Mammary epithelial cell (primary cell): ENCODE measurements at regions of chr10 and their contacts with region 1.

Region 1: GRCh38 chr10:5595591-5596590 is 70.5 kb downstream of the ASB13 start:
- DNase-seq: peak; percentile 99
- H3K4me3 ChIP-seq: peak overlapping the region; percentile 12 to 36 (median 30)
- H3K27ac ChIP-seq: peak overlapping the region; percentile 90
- H3K4me1 ChIP-seq: peaks cover 31% of the 10 kb centered on the region
- H3K27me3 ChIP-seq: no peaks in the 10 kb centered on the region
- CTCF ChIP-seq: no peak

Region 2: DNA sequence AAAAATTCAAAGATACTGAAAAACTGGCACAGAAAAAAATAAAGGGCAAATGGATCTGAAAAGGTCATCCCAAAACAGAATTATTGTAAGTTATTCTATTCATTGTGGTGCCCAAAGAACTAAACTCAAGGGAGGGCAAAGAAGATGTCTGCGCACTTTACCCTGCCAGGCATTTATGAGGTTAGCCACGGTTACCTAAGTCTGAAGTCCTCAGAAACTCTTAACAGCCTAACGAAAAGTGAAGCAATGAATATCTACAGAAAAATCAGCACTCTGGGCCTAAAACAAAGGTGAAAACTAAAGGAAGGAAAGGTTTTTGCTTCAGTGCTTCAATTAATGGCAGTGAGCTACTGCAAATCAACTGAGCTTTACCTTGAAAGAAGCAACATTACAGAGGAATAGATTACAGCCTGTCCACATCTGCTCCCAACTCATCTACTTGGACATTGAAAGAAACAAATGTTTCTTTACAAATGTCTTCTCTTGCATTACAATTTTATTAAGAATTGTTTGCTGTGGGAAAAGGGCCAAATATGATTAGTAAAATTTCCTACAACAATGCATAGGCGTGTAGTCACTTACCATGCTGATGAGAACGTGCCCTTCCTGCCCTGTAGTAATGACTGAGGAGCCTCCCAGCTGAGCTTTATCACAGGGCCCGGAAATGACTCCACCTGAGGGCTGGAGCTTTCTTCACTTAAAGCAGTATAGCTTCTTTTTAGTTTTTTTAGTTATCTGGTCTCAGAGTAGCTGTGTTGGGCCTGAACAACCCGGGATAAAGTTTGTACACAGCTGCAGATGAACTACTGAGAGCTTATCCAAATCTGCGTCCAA is 191.5 kb before region 1 on chr10 and contains the start of gene TUBAL3:
- CTCF ChIA-PET with region 1: no interaction called
- dilution Hi-C with region 1: no loop called
- in situ Hi-C with region 1: no loop called
- intact Hi-C with region 1: no loop called
- DNase-seq: peak; percentile 56
- H3K4me3 ChIP-seq: peak within 1 kb of the TSS in 2 of 3 experiments; percentile 27 to 46
- H3K27ac ChIP-seq: no peak within 1 kb of the TSS
- H3K4me1 ChIP-seq: peaks cover 5% of the 10 kb centered on the region
- H3K27me3 ChIP-seq: no peaks in the 10 kb centered on the region
- CTCF ChIP-seq: no peak
- total RNA-seq, gene TUBAL3: 0.17 to 0.73 TPM

Region 3: GRCh38 chr10:5614155-5614721 is 18.3 kb after region 1 on chr10:
- CTCF ChIA-PET with region 1: no interaction called
- dilution Hi-C with region 1: no loop called
- in situ Hi-C with region 1: no loop called
- intact Hi-C with region 1: loop called (anchors 1 kb)
- DNase-seq: no peak
- H3K4me3 ChIP-seq: no peak overlapping the region
- H3K27ac ChIP-seq: peak overlapping the region; percentile 46
- H3K4me1 ChIP-seq: peaks cover 71% of the 10 kb centered on the region
- H3K27me3 ChIP-seq: no peaks in the 10 kb centered on the region
- CTCF ChIP-seq: no peak